ENCODE measurements at regions of chr1 and their contacts with region 1.

Region 1: GRCh38 chr1:92960395-92961130 is 699 bp downstream of the DIPK1A start:
- DNase-seq: peak; percentile 86
- ATAC-seq: peak; percentile 42
- H3K4me3 ChIP-seq: peak overlapping the region; percentile 77 to 91 (median 86)
- H3K4me3 Mint-ChIP-seq: peak overlapping the region; percentile 92
- H3K27ac ChIP-seq: peak overlapping the region; percentile 87 to 98
- H3K27ac Mint-ChIP-seq: peak overlapping the region; percentile 94
- H3K4me1 ChIP-seq: peaks cover 62 to 80% of the 10 kb centered on the region in 2 donors
- H3K4me1 Mint-ChIP-seq: peaks cover 44% of the 10 kb centered on the region
- H3K27me3 ChIP-seq: no peaks in the 10 kb centered on the region
- H3K27me3 Mint-ChIP-seq: no peaks in the 10 kb centered on the region
- CTCF ChIP-seq: peak; percentile 66

Region 2: GRCh38 chr1:92877792-92878191 is 82.8 kb before region 1 on chr1:
- CTCF ChIA-PET with region 1: interaction called, 22 read pairs
- POLR2A ChIA-PET with region 1: no interaction called
- intact Hi-C with region 1: no loop called
- DNase-seq: no peak
- ATAC-seq: no peak
- H3K4me3 ChIP-seq: no peak overlapping the region
- H3K4me3 Mint-ChIP-seq: no peak overlapping the region
- H3K27ac ChIP-seq: no peak overlapping the region
- H3K27ac Mint-ChIP-seq: no peak overlapping the region
- H3K4me1 ChIP-seq: peaks cover 12 to 19% of the 10 kb centered on the region in 2 donors
- H3K4me1 Mint-ChIP-seq: peaks cover 31% of the 10 kb centered on the region
- H3K27me3 ChIP-seq: no peaks in the 10 kb centered on the region
- H3K27me3 Mint-ChIP-seq: no peaks in the 10 kb centered on the region
- CTCF ChIP-seq: no peak

Region 3: GRCh38 chr1:92929461-92929860 is 31.1 kb before region 1 on chr1:
- CTCF ChIA-PET with region 1: interaction called, 14 read pairs
- POLR2A ChIA-PET with region 1: no interaction called
- intact Hi-C with region 1: no loop called
- DNase-seq: no peak
- ATAC-seq: peak; percentile 43
- H3K4me3 ChIP-seq: peak overlapping the region in 2 of 5 experiments; percentile 8 to 29
- H3K4me3 Mint-ChIP-seq: peak overlapping the region; percentile 75
- H3K27ac ChIP-seq: peak overlapping the region; percentile 57 to 82
- H3K27ac Mint-ChIP-seq: peak overlapping the region; percentile 86
- H3K4me1 ChIP-seq: peaks cover 55 to 80% of the 10 kb centered on the region in 2 donors
- H3K4me1 Mint-ChIP-seq: peaks cover 73% of the 10 kb centered on the region
- H3K27me3 ChIP-seq: no peaks in the 10 kb centered on the region
- H3K27me3 Mint-ChIP-seq: no peaks in the 10 kb centered on the region
- CTCF ChIP-seq: no peak

Region 4: GRCh38 chr1:92980732-92981647 is 20.4 kb after region 1 on chr1:
- CTCF ChIA-PET with region 1: interaction called, 174 read pairs
- POLR2A ChIA-PET with region 1: interaction called, 116 read pairs
- intact Hi-C with region 1: no loop called
- DNase-seq: peak; percentile 48
- ATAC-seq: peak; percentile 37
- H3K4me3 ChIP-seq: peak overlapping the region in 1 of 5 experiments; percentile 24
- H3K4me3 Mint-ChIP-seq: peak overlapping the region; percentile 69
- H3K27ac ChIP-seq: peak overlapping the region; percentile 47 to 80
- H3K27ac Mint-ChIP-seq: peak overlapping the region; percentile 98
- H3K4me1 ChIP-seq: peaks cover 54 to 55% of the 10 kb centered on the region in 2 donors
- H3K4me1 Mint-ChIP-seq: peaks cover 52% of the 10 kb centered on the region
- H3K27me3 ChIP-seq: no peaks in the 10 kb centered on the region
- H3K27me3 Mint-ChIP-seq: no peaks in the 10 kb centered on the region
- CTCF ChIP-seq: no peak

Region 5: GRCh38 chr1:93007941-93008577 is 47.5 kb after region 1 on chr1:
- CTCF ChIA-PET with region 1: interaction called, 11 read pairs
- POLR2A ChIA-PET with region 1: no interaction called
- intact Hi-C with region 1: no loop called
- DNase-seq: no peak
- ATAC-seq: no peak
- H3K4me3 ChIP-seq: no peak overlapping the region
- H3K4me3 Mint-ChIP-seq: no peak overlapping the region
- H3K27ac ChIP-seq: no peak overlapping the region
- H3K27ac Mint-ChIP-seq: no peak overlapping the region
- H3K4me1 ChIP-seq: peaks cover 13 to 14% of the 10 kb centered on the region in 2 donors
- H3K4me1 Mint-ChIP-seq: peaks cover 14% of the 10 kb centered on the region
- H3K27me3 ChIP-seq: no peaks in the 10 kb centered on the region
- H3K27me3 Mint-ChIP-seq: no peaks in the 10 kb centered on the region
- CTCF ChIP-seq: no peak

Region 6: DNA sequence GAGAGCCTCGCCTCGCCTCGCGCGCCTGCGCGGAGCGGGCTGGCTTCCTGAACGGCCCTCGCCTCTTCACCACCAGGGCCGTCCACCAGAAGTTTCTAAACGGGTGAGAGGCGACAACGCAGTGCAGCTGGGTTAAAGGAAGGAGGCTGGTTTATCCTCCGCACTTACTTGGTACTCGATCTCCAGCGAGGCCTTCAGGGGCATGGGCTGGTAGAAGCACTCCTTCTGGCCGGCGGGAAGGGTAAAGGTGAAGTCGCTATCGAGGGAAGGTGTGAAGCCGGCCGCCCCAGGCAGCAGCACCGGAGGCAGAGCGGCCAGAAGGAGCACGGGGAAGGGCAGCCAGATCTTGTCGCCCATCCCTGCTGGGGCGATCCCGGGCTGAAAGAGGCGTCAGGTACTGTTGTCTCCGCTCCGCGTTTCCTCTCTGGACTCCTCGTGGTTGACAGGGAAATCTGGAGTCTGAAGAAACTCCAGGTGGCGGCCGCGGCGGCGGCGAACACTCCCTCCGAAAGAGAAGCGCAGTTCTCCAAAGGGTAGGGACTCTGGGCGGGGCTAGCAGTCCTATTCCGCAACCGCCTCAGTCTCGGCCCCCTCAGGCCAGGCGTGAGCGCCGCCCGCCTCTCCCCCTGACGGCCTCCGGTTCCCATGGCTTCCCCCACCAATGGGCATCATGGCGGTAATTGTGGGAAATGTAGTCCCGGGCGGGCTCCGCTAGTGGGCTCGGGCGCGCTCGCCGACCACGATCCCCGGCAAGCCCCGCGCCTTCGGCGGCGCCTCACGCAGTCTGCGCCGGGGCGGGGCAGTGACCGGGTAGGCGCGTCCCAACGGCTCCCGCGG is 219.5 kb after region 1 on chr1 and contains the start of gene TMED5:
- CTCF ChIA-PET with region 1: no interaction called
- POLR2A ChIA-PET with region 1: no interaction called
- intact Hi-C with region 1: loop called (anchors 5 kb)
- DNase-seq: peak; percentile 97
- ATAC-seq: peak; percentile 85
- H3K4me3 ChIP-seq: peak within 1 kb of the TSS; percentile 81 to 98 (median 97)
- H3K4me3 Mint-ChIP-seq: peak within 1 kb of the TSS; percentile 90
- H3K27ac ChIP-seq: peak within 1 kb of the TSS; percentile 95 to 96
- H3K27ac Mint-ChIP-seq: peak within 1 kb of the TSS; percentile 93
- H3K4me1 ChIP-seq: peaks cover 27 to 35% of the 10 kb centered on the region in 2 donors
- H3K4me1 Mint-ChIP-seq: peaks cover 34% of the 10 kb centered on the region
- H3K27me3 ChIP-seq: no peaks in the 10 kb centered on the region
- H3K27me3 Mint-ChIP-seq: no peaks in the 10 kb centered on the region
- CTCF ChIP-seq: peak; percentile 24
- total RNA-seq, gene TMED5: 46.1 and 50.7 TPM in 2 replicates

Region 7: GRCh38 chr1:93552741-93553455 is 592.3 kb after region 1 on chr1:
- CTCF ChIA-PET with region 1: no interaction called
- POLR2A ChIA-PET with region 1: no interaction called
- intact Hi-C with region 1: no loop called
- DNase-seq: no peak
- ATAC-seq: no peak
- H3K4me3 ChIP-seq: no peak overlapping the region
- H3K4me3 Mint-ChIP-seq: no peak overlapping the region
- H3K27ac ChIP-seq: no peak overlapping the region
- H3K27ac Mint-ChIP-seq: no peak overlapping the region
- H3K4me1 ChIP-seq: peaks cover 0 to 1% of the 10 kb centered on the region in 2 donors
- H3K4me1 Mint-ChIP-seq: peaks cover 2% of the 10 kb centered on the region
- H3K27me3 ChIP-seq: no peaks in the 10 kb centered on the region
- H3K27me3 Mint-ChIP-seq: no peaks in the 10 kb centered on the region
- CTCF ChIP-seq: no peak

Measured in B cell (primary cell).